Esophagus muscularis mucosa (tissue), 4 donors: ENCODE measurements at regions of chr1 and their contacts with region 1.

Region 1: GRCh38 chr1:200971955-200972711 is 51.4 kb downstream of the KIF21B start:
- DNase-seq: no peak
- H3K4me3 ChIP-seq: no peak overlapping the region
- H3K27ac ChIP-seq: no peak overlapping the region
- H3K4me1 ChIP-seq: peaks cover 0 to 9% (median 8%) of the 10 kb centered on the region in 4 donors
- H3K27me3 ChIP-seq: no peaks in the 10 kb centered on the region
- CTCF ChIP-seq: peak in 2 of 3 experiments; percentile 72 to 93
- EP300 ChIP-seq: no peak
- POLR2A ChIP-seq: no peak

Region 2: GRCh38 chr1:200699871-200700270 is 272.3 kb before region 1 on chr1:
- intact Hi-C with region 1: no loop called
- DNase-seq: no peak
- H3K4me3 ChIP-seq: no peak overlapping the region
- H3K27ac ChIP-seq: no peak overlapping the region
- H3K4me1 ChIP-seq: no peaks in the 10 kb centered on the region
- H3K27me3 ChIP-seq: no peaks in the 10 kb centered on the region
- CTCF ChIP-seq: no peak
- EP300 ChIP-seq: no peak
- POLR2A ChIP-seq: no peak

Region 3: GRCh38 chr1:201042779-201043461 is 70.8 kb after region 1 on chr1:
- intact Hi-C with region 1: loop called (anchors 2 kb)
- DNase-seq: no peak
- H3K4me3 ChIP-seq: no peak overlapping the region
- H3K27ac ChIP-seq: no peak overlapping the region
- H3K4me1 ChIP-seq: peaks cover 0 to 7% (median 6%) of the 10 kb centered on the region in 4 donors
- H3K27me3 ChIP-seq: no peaks in the 10 kb centered on the region
- CTCF ChIP-seq: peak; percentile 65 to 82 (median 75)
- EP300 ChIP-seq: no peak
- POLR2A ChIP-seq: no peak

Region 4: DNA sequence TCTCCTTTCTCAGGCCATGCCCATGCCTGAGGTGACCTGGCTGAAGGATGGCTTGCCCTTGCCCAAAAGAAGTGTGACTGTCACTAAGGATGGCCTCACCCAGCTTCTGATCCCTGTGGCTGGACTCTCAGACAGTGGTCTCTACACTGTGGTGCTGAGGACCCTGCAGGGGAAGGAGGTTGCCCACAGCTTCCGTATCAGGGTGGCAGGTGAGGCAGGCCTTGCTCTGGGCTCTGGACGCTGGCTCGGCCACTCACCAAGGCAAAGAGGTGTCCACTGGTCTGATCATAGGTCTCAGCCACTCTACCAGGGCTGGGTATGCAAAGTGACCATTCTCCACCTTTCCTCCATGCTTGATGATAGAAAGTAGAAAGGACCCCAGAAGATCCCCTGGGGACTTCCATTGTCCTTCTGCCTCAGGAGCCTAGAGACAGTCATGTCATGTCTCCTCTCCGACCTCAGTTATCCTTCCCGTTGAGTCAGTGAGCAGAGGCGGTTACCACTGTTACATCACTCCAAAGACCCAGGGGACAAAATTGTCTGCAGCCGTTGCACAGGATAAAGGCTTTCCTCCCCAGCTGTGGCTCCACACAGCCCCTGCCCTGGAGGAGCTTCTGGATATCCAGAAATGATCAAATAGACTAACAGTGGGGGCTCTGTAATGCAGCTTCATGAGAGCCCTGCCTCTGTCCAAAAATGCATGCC is 252.7 kb after region 1 on chr1:
- intact Hi-C with region 1: loop called (anchors 2 kb)
- DNase-seq: peak; percentile 88
- H3K4me3 ChIP-seq: no peak overlapping the region
- H3K27ac ChIP-seq: no peak overlapping the region
- H3K4me1 ChIP-seq: no peaks in the 10 kb centered on the region
- H3K27me3 ChIP-seq: peaks cover 0 to 14% (median 0%) of the 10 kb centered on the region in 4 donors
- CTCF ChIP-seq: no peak
- EP300 ChIP-seq: no peak
- POLR2A ChIP-seq: no peak